Dendritic cell treated with granulocyte-macrophage colony-stimulating factor and Interleukin-4, amounts not matched to agents 40 ng/mL and 50 ng/mL, for 4 days (primary cell): ENCODE measurements at regions of chr12 and their contacts with region 1.

Region 1: DNA sequence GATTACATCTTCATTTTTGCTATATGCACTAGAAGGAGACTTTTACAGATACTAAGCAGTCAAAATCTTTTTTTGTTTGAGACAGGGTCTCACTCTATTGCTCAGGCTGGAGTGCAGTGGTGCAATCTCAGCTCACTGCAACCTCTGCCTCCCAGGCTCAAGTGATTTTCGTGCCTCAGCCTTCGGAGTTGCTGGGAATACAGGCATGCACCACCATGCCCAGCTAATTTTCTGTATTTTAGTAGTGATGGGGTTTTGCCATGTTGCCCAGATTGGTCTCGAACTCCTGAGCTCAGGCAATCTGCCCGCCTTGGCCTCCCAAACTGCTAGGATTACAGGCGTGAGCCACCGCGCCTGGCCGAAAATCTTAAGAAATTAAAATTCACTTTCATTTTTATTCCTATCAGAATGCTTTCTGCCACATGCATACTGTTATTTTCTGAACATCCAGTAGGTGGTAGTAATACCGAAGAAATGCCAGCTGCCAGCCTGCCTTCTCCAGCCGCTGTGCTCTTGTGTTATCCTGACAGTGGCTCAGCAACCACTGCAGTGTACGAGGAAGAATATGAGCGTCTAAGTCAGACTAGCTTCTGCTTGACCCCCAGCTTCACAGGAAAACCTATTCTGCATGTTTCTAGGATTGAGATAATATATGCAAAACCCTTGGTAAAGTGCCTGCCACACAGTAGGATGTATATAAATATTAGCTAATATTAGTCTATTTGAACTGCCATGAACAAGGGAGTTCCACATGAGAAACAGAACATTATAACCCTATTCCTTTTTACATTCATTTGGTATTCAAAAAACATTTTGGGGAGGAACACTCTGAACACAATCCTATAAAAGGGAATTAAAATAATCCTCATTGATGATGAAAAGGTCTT is 54.2 kb downstream of the RPAP3 start:
- H3K4me3 Mint-ChIP-seq: no peak overlapping the region
- H3K27ac Mint-ChIP-seq: peak overlapping the region; percentile 60
- H3K4me1 Mint-ChIP-seq: peaks cover 20% of the 10 kb centered on the region
- H3K27me3 Mint-ChIP-seq: no peaks in the 10 kb centered on the region

Region 2: GRCh38 chr12:47686645-47687240 is 35.1 kb after region 1 on chr12:
- intact Hi-C with region 1: loop called (anchors 2 kb)
- H3K4me3 Mint-ChIP-seq: no peak overlapping the region
- H3K27ac Mint-ChIP-seq: no peak overlapping the region
- H3K4me1 Mint-ChIP-seq: no peaks in the 10 kb centered on the region
- H3K27me3 Mint-ChIP-seq: no peaks in the 10 kb centered on the region

Region 3: DNA sequence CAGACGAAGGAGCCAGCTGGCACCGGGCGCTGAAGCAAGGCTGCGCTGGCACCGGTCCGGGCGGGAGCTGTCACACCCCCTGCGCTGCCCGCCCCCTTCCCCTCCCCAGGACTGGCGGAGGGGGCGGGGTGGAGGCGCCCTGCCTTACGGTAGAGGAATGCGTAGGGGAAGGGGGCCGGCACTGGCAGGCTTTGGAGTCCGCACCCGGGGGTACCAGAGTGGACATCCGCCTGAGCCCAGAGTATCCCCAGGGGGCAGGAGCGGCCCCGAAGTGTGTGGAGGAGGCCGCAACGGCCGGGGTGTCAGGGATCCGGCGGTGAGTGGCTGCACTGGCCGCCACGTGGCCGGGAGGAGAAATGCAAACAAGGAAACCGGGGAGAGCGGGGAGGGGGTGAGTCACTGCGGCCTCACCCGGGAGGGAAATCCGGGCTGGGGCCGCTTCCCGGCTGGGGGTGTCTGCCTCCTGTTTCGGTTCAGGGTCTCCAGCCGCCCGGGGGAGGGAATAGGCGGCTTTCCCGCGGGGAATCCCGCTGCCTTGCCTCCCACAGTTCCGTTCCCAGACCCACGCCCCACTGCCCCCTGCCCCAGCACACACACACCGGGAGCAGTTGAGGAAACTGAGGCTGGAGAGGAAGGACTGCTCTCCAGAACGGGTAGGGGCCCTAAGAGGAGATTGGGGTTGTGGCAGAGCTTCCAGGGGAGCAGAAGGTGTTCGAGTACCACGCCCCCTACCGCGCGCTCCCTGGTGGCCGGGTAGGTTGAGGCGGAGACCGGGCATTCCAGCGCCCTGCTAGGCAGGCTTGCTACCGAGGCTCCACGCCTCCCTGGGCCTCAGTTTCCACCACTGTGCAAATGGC is 107.5 kb after region 1 on chr12 and contains the start of gene RAPGEF3:
- intact Hi-C with region 1: loop called (anchors 5 kb)
- H3K4me3 Mint-ChIP-seq: peak within 1 kb of the TSS; percentile 79
- H3K27ac Mint-ChIP-seq: peak within 1 kb of the TSS; percentile 75
- H3K4me1 Mint-ChIP-seq: peaks cover 43% of the 10 kb centered on the region
- H3K27me3 Mint-ChIP-seq: peaks cover 29% of the 10 kb centered on the region